ENCODE measurements at regions of chr2 and their contacts with region 1.

Region 1: DNA sequence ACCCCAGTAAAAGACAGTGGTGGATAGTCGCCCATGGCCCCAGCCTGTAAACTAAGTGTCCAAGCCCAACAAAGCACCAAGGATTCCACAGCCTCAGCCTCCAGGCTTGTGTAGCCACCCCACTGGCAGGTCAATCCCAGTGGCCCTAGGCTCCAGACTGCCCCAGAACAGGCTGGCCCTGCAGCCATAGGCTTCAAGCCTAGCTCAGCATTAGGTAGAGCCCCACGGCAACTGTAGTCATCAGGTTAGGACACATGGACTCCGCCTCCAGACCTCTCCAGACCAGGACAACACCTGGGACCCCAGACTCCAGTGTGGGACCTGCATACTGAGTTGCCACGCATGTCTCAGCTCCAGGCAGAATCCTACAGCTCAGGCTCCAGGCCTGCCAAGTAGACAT is 1590.6 kb upstream of the DDX18 start:
- DNase-seq: no peak
- ATAC-seq: no peak
- H3K4me3 Mint-ChIP-seq: no peak overlapping the region
- H3K27ac Mint-ChIP-seq: no peak overlapping the region
- H3K4me1 Mint-ChIP-seq: no peaks in the 10 kb centered on the region
- H3K27me3 Mint-ChIP-seq: no peaks in the 10 kb centered on the region
- CTCF ChIP-seq: no peak

Region 2: GRCh38 chr2:116211719-116212118 is 12.2 kb before region 1 on chr2:
- CTCF ChIA-PET with region 1: no interaction called
- POLR2A ChIA-PET with region 1: no interaction called
- intact Hi-C with region 1: loop called (anchors 1 kb)
- DNase-seq: no peak
- ATAC-seq: no peak
- H3K4me3 Mint-ChIP-seq: no peak overlapping the region
- H3K27ac Mint-ChIP-seq: no peak overlapping the region
- H3K4me1 Mint-ChIP-seq: no peaks in the 10 kb centered on the region
- H3K27me3 Mint-ChIP-seq: no peaks in the 10 kb centered on the region
- CTCF ChIP-seq: no peak